SK-N-SH (cell line): ENCODE measurements at regions of chr1 and their contacts with region 1.

Region 1: DNA sequence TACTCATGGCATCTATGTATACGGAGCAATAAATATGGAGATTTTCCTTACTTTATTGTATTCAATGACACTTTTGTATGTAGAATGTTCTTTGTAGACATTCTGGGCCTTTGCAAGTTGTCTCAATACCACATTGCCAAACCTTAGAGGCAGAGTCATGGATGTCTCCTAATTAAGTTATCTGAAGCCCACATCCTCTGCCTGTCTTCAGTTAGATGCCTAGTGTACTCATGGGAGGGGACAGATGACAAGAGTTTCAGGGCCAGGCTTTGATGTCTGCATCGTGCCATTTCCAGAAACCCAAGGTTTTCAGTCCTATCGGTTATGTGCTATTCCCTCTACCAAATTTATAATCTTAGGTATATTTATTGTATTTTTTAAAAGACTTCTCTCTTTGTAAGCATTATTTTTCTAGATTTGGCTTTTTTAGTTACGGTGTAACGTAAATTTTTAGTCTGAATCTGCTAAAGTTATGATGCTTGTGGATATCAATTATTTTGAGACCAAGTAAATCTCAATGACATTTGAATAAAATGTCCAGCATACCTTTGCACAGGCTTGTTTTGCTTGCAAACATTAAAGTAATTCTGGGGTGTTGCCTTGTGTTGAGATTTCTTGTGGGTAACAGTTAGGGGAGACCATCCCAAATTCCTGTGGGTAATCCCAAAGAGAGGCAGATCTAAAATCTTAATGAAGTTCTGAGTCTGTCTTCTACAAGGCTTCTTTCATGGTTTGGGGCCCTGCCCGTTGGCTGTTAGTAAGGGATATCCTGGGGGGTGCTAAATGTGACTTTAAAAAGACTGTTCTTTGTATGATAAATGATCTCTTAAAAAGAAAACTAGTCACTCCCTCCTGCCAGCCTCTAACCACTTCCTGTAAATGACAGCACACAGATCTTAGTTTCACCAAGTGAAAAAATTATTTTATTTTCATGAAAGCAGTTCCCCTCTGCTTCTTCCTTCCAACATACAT is 8.0 kb upstream of the MACF1 start:
- DNase-seq: peak; percentile 33
- H3K4me3 ChIP-seq: peak overlapping the region in 1 of 2 experiments; percentile 14; a peak in 1 of 4 replicates
- H3K27ac ChIP-seq: peak overlapping the region; percentile 75 to 99
- H3K4me1 ChIP-seq: peaks cover 8 to 54% of the 10 kb centered on the region in 2 experiments; a peak in 3 of 4 replicates
- H3K27me3 ChIP-seq: no peaks in the 10 kb centered on the region
- CTCF ChIP-seq: no peak
- EP300 ChIP-seq: peak in 1 of 2 experiments; percentile 80; a peak in 1 of 4 replicates
- RAD21 ChIP-seq: no peak

Region 2: DNA sequence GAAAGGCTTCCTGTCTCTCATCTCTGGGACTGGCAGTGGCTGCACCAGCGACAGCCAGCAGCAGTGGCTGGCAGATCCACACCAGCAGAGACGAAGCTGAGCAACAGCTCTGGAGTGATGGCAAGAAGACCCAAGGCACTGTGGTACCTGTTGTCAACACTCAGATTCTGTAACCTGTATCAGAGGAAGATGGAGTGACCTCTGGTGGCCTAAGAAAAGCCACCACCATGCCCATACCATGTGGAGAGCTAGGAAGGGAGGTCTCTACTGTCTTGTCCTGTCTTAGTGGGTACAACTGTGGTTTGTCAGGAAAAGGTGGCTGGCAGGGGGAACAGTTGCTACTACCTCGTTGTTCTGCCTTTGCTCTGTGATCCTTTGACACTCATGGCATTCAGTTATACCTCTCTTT is 232.4 kb before region 1 on chr1:
- CTCF ChIA-PET with region 1: no interaction called
- POLR2A ChIA-PET with region 1: no interaction called
- DNase-seq: peak; percentile 26
- H3K4me3 ChIP-seq: no peak overlapping the region
- H3K27ac ChIP-seq: no peak overlapping the region
- H3K4me1 ChIP-seq: no peaks in the 10 kb centered on the region
- H3K27me3 ChIP-seq: no peaks in the 10 kb centered on the region
- CTCF ChIP-seq: peak; percentile 27
- EP300 ChIP-seq: no peak
- RAD21 ChIP-seq: peak; percentile 31

Region 3: DNA sequence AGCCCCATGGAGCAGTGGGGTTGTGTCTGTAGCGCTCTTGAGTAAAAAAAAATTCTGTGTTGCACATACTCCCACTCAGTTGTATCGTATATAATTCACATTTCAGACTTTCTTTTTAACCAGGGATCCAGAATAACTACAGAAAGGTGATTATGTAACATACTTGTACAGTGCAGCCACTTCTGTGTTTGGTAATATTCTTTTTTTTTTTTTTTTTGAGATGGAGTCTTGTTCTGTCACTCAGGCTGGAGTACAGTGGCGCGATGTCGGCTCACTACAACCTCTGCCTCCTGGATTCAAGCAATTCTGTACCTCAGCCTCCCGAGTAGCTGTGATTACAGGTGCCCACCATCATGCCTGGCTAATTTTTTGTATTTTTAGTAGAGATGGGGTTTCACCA is 74.5 kb before region 1 on chr1:
- CTCF ChIA-PET with region 1: interaction called, 11 read pairs
- POLR2A ChIA-PET with region 1: no interaction called
- DNase-seq: no peak
- H3K4me3 ChIP-seq: no peak overlapping the region
- H3K27ac ChIP-seq: no peak overlapping the region
- H3K4me1 ChIP-seq: peaks cover 15 to 16% of the 10 kb centered on the region in 2 experiments
- H3K27me3 ChIP-seq: no peaks in the 10 kb centered on the region
- CTCF ChIP-seq: no peak
- EP300 ChIP-seq: no peak
- RAD21 ChIP-seq: no peak

Region 4: DNA sequence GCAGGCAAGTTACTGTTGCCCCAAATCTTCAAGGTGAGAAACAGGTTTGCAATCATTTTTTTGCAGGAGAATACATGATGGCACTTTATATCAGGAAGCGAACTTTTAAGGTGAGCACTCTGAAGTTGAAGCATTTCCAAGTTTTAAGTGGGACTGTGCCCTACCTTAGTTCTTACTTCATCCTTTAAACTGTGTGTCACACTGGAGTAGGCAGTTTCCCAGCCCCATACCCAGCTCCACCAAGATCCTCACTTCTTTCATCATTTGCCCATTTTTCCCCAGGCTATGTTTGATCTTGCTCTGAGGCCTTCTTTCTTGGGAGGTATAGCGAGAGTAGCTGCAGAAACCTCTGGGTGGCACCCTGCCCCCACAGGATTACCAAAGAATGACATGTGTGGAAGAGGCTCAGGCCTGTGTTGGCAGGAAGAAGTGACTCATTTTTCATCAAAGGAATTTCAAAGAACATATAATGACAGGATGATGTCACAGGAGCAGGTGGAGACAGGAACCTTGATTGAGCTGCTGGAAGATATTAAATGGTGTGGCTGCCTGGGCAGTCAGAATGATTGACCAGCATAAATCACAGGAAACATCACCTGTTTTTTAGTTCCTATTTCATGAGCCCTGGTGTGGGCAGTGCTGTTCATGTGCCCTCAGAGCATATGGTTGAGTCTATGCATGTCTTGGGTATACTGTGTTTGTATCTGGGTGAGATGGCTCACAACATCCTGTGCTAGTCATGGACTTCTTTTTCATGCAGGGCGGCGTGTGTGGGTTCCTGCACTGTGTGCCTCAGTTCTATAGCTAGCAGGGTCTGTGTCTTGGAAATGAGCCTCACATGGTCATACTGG is 12.8 kb before region 1 on chr1:
- CTCF ChIA-PET with region 1: interaction called, 53 read pairs
- POLR2A ChIA-PET with region 1: no interaction called
- DNase-seq: no peak
- H3K4me3 ChIP-seq: no peak overlapping the region
- H3K27ac ChIP-seq: peak overlapping the region; percentile 19 to 93; a peak in 3 of 4 replicates
- H3K4me1 ChIP-seq: peaks cover 14 to 52% of the 10 kb centered on the region in 2 experiments; a peak in 3 of 4 replicates
- H3K27me3 ChIP-seq: no peaks in the 10 kb centered on the region
- CTCF ChIP-seq: peak; percentile 60
- EP300 ChIP-seq: peak; percentile 34 to 78; a peak in 2 of 4 replicates
- RAD21 ChIP-seq: peak; percentile 34

Region 5: GRCh38 chr1:39238476-39238875 is 41.9 kb after region 1 on chr1:
- CTCF ChIA-PET with region 1: interaction called, 14 read pairs
- POLR2A ChIA-PET with region 1: no interaction called
- DNase-seq: no peak
- H3K4me3 ChIP-seq: no peak overlapping the region
- H3K27ac ChIP-seq: peak overlapping the region in 1 of 2 experiments; percentile 73; a peak in 2 of 4 replicates
- H3K4me1 ChIP-seq: peaks cover 0 to 26% of the 10 kb centered on the region in 2 experiments; a peak in 3 of 4 replicates
- H3K27me3 ChIP-seq: no peaks in the 10 kb centered on the region
- CTCF ChIP-seq: no peak
- EP300 ChIP-seq: no peak; a peak in 1 of 4 replicates
- RAD21 ChIP-seq: no peak

Region 6: GRCh38 chr1:39258146-39258924 is 61.8 kb after region 1 on chr1:
- CTCF ChIA-PET with region 1: interaction called, 100 read pairs
- POLR2A ChIA-PET with region 1: interaction called, 3 read pairs
- DNase-seq: peak; percentile 80
- H3K4me3 ChIP-seq: no peak overlapping the region; a peak in 1 of 4 replicates
- H3K27ac ChIP-seq: peak overlapping the region; percentile 5 to 48; a peak in 1 of 4 replicates
- H3K4me1 ChIP-seq: peaks cover 10 to 11% of the 10 kb centered on the region in 2 experiments
- H3K27me3 ChIP-seq: no peaks in the 10 kb centered on the region
- CTCF ChIP-seq: peak; percentile 86
- EP300 ChIP-seq: no peak
- RAD21 ChIP-seq: peak; percentile 89

Region 7: GRCh38 chr1:39317910-39318633 is 121.5 kb after region 1 on chr1:
- CTCF ChIA-PET with region 1: interaction called, 16 read pairs
- POLR2A ChIA-PET with region 1: no interaction called
- DNase-seq: no peak
- H3K4me3 ChIP-seq: no peak overlapping the region
- H3K27ac ChIP-seq: no peak overlapping the region
- H3K4me1 ChIP-seq: peaks cover 0 to 2% of the 10 kb centered on the region in 2 experiments; a peak in 1 of 4 replicates
- H3K27me3 ChIP-seq: no peaks in the 10 kb centered on the region
- CTCF ChIP-seq: no peak
- EP300 ChIP-seq: no peak
- RAD21 ChIP-seq: no peak